Sciatic nerve (tissue), 2 donors: ENCODE measurements at regions of chr4 and their contacts with region 1.

Region 1: DNA sequence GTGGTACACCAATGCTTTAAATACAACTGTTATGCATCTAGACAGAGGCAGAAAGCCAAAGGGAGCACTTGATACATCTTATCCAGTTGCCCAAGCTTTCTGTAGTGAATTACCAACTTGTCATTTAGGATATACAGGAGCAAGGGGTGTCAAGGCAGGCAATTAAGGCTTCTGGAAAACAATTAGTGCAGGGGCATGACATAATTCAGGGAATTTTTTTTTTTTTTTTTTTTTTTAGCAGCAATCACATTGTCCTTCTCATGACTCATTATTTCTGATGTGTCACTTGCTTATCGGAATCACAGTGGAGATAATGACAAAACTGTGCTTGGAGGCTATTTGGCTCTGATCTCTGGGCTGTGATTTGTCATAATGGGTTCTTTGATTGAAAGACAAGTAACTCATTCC is 259.5 kb downstream of the ARHGAP24 start:
- DNase-seq: no peak
- ATAC-seq: peak; percentile 34

Region 2: DNA sequence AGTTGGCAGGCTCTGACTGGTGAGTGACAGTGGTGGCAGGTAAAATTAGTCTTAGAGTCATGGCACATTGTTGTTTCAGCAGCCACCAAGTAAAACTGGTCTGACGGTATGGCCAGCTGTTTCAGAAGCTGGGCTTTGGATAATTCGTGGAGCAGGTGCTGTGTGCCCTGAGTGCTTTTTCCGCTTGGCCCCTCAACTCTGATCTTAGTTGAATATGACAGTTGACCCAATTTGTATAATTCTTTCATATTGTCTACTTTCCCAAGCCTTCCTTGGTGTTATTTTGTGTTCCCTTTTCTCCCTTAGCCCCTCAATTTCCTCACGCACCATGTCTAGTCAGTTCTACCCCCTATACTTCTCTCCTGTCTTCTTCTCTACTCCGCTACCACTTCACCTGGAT is 1119.5 kb before region 1 on chr4:
- intact Hi-C with region 1: no loop called
- DNase-seq: no peak
- ATAC-seq: no peak

Region 3: DNA sequence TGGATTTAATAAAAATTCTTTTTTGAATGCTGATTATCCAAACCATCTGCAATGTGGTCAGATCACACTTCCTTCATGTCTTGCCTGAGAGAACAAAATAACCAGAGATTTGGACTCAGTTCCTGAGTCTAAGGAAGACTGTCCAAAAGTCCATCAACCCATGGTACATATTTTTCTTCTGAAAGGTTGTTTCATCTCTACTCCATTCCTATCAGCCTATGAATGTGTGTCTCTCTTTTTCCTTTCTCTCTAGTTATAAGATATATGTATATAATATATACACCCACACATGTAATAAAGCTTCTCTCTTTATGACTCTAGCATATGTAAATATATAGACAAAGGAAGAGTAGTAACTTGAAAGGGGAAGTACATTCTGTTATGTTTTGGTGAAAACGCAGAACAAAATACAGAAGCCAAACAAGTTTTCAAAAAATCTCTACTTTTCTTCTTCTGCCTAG is 32.5 kb before region 1 on chr4:
- intact Hi-C with region 1: loop called (anchors 1 kb)
- DNase-seq: no peak
- ATAC-seq: peak; percentile 58